Dendritic cell treated with granulocyte-macrophage colony-stimulating factor and Interleukin-4, amounts not matched to agents 40 ng/mL and 50 ng/mL, for 4 days (primary cell): ENCODE measurements at regions of chr2 and their contacts with region 1.

Region 1: GRCh38 chr2:43484323-43484930 is 111.4 kb downstream of the THADA start:
- H3K4me3 Mint-ChIP-seq: no peak overlapping the region
- H3K27ac Mint-ChIP-seq: no peak overlapping the region
- H3K4me1 Mint-ChIP-seq: peaks cover 31% of the 10 kb centered on the region
- H3K27me3 Mint-ChIP-seq: no peaks in the 10 kb centered on the region

Region 2: GRCh38 chr2:42828487-42829425 is 655.7 kb before region 1 on chr2:
- intact Hi-C with region 1: loop called (anchors 2 kb)
- H3K4me3 Mint-ChIP-seq: no peak overlapping the region
- H3K27ac Mint-ChIP-seq: no peak overlapping the region
- H3K4me1 Mint-ChIP-seq: peaks cover 22% of the 10 kb centered on the region
- H3K27me3 Mint-ChIP-seq: peaks cover 16% of the 10 kb centered on the region

Region 3: GRCh38 chr2:42859006-42859552 is 625.3 kb before region 1 on chr2:
- intact Hi-C with region 1: loop called (anchors 5 kb)
- H3K4me3 Mint-ChIP-seq: no peak overlapping the region
- H3K27ac Mint-ChIP-seq: no peak overlapping the region
- H3K4me1 Mint-ChIP-seq: peaks cover 27% of the 10 kb centered on the region
- H3K27me3 Mint-ChIP-seq: peaks cover 3% of the 10 kb centered on the region

Region 4: GRCh38 chr2:42944779-42945415 is 539.5 kb before region 1 on chr2:
- intact Hi-C with region 1: loop called (anchors 1 kb)
- H3K4me3 Mint-ChIP-seq: no peak overlapping the region
- H3K27ac Mint-ChIP-seq: no peak overlapping the region
- H3K4me1 Mint-ChIP-seq: peaks cover 48% of the 10 kb centered on the region
- H3K27me3 Mint-ChIP-seq: peaks cover 2% of the 10 kb centered on the region

Region 5: GRCh38 chr2:42974721-42975717 is 509.4 kb before region 1 on chr2:
- intact Hi-C with region 1: loop called (anchors 1 kb)
- H3K4me3 Mint-ChIP-seq: peak overlapping the region; percentile 71
- H3K27ac Mint-ChIP-seq: peak overlapping the region; percentile 74
- H3K4me1 Mint-ChIP-seq: peaks cover 67% of the 10 kb centered on the region
- H3K27me3 Mint-ChIP-seq: peaks cover 7% of the 10 kb centered on the region

Region 6: GRCh38 chr2:43131024-43131889 is 353.2 kb before region 1 on chr2:
- intact Hi-C with region 1: loop called (anchors 5 kb)
- H3K4me3 Mint-ChIP-seq: peak overlapping the region; percentile 17
- H3K27ac Mint-ChIP-seq: peak overlapping the region; percentile 84
- H3K4me1 Mint-ChIP-seq: peaks cover 91% of the 10 kb centered on the region
- H3K27me3 Mint-ChIP-seq: no peaks in the 10 kb centered on the region

Region 7: DNA sequence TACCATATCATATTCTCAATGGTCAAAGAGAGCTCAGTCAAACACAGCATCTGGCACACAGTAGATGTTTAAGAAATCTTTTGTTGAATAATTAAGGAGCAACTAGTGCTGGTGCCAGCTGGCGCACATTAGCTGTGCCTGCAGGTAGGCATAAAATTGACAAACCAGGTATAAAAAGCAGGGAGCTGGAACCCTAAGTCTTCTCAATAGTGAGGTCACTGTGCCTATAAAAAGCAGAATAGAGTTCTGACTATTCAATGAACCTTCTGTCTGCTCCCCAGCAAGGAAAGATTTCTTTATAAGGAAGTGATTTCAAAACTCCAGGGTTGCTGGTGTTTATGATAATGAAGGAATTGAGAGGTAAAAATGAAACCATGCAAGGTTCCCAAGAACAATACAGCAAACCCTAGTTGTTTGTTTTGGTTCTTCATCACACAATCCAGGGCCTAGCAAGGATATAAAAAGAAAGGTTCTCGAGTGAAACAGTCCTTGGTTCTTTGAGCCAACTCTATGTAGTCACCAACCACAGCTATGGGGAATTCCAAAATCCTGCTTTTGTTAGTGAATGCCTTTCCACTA is 35.3 kb after region 1 on chr2:
- intact Hi-C with region 1: no loop called
- H3K4me3 Mint-ChIP-seq: no peak overlapping the region
- H3K27ac Mint-ChIP-seq: no peak overlapping the region
- H3K4me1 Mint-ChIP-seq: peaks cover 17% of the 10 kb centered on the region
- H3K27me3 Mint-ChIP-seq: no peaks in the 10 kb centered on the region

Region 8: DNA sequence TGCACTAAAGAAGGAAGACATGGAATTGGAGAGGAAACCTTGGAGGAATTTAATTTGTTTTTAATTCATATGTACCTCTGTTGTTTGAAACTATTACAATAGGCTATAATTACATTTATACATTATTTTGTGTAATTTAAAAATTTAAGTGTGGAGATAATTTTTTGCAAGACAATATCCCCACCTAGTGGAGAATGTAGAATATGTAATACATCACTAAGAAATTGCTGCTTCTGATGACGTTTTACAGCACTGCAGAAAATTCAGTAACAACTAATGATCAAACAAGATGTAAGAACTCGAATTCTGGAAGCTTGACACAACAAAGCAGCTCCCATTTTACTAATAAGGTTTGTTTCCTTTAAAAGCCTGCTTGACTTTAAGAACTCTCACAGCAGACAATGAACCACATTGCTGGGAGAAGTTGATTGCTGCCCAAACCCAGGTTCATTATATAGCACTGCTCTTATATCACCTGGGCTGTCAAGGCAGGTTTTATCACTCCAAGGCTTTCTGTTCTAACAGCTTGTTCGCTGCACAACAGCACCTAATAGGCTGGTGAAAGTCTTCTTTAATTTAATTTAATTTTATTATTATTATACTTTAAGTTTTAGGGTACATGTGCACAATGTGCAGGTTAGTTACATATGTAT is 58.0 kb after region 1 on chr2:
- intact Hi-C with region 1: loop called (anchors 5 kb)
- H3K4me3 Mint-ChIP-seq: no peak overlapping the region
- H3K27ac Mint-ChIP-seq: no peak overlapping the region
- H3K4me1 Mint-ChIP-seq: peaks cover 15% of the 10 kb centered on the region
- H3K27me3 Mint-ChIP-seq: no peaks in the 10 kb centered on the region